AG04449 (cell line): ENCODE measurements at regions of chr6 and their contacts with region 1.

Region 1: GRCh38 chr6:73653571-73654424 is at the start of gene SLC17A5:
- DNase-seq: peak; percentile 49
- H3K4me3 ChIP-seq: peak within 1 kb of the TSS; percentile 96
- CTCF ChIP-seq: no peak

Region 2: DNA sequence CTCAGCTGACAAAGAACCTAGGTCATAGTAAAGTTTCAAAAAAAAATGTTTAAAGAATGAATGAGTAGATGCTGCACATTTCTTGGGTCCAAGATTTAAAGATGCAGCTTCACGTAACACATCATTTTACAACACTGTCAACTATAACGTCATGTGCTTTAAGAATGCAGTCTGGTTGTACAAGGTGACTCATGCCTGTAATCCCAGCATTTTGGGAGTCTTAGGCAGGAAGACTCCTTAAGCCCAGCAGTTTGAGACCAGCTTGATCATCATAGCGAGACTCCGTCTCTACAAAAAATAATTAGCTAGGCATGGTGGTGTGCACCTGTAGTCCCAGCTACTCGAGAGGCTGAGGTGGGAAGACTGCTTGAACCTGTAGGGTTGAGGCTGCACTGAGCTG is 21.9 kb before region 1 on chr6:
- CTCF ChIA-PET with region 1: interaction called, 11 read pairs
- POLR2A ChIA-PET with region 1: no interaction called
- DNase-seq: no peak
- H3K4me3 ChIP-seq: no peak overlapping the region
- CTCF ChIP-seq: no peak

Region 3: GRCh38 chr6:73665686-73666319 is 12.0 kb after region 1 on chr6:
- CTCF ChIA-PET with region 1: interaction called, 20 read pairs
- POLR2A ChIA-PET with region 1: interaction called, 4 read pairs
- DNase-seq: no peak
- H3K4me3 ChIP-seq: no peak overlapping the region
- CTCF ChIP-seq: no peak

Region 4: DNA sequence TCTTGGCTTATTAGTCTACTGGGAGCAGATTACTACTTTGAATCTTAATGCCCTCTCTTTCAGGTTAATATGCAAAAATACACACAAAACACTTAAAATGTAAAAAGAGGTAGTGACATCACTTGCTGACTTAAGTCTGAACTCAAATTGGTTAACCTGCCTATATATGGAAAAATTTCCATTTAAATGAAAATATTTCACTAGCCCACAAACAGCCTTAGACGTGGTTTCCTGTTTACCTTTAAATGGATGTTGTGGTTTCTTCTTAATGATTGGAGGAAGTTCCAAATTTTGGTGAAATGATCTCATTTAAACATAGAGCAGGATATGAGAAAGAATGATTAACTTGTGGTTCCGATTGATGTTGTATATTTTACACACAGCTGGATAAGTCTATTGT is 595.9 kb after region 1 on chr6:
- CTCF ChIA-PET with region 1: no interaction called
- POLR2A ChIA-PET with region 1: no interaction called
- DNase-seq: no peak
- H3K4me3 ChIP-seq: no peak overlapping the region
- CTCF ChIP-seq: no peak